ENCODE measurements at regions of chr6 and their contacts with region 1.

Region 1: GRCh38 chr6:35452186-35453090 is at the start of gene FANCE:
- DNase-seq: peak; percentile 98
- H3K4me3 ChIP-seq: peak within 1 kb of the TSS; percentile 47 to 69 (median 65)
- H3K27ac ChIP-seq: peak within 1 kb of the TSS; percentile 69 to 88 (median 84)
- H3K4me1 ChIP-seq: peaks cover 9 to 21% (median 16%) of the 10 kb centered on the region in 4 donors
- H3K27me3 ChIP-seq: no peaks in the 10 kb centered on the region
- CTCF ChIP-seq: no peak
- EP300 ChIP-seq: no peak
- POLR2A ChIP-seq: peak; percentile 29
- total RNA-seq, gene FANCE: 0.75 to 30.8 (median 3.8) TPM

Region 2: GRCh38 chr6:34425498-34426410 is 1026.7 kb before region 1 on chr6 and contains the start of gene RPS10:
- in situ Hi-C with region 1: no loop called
- intact Hi-C with region 1: loop called (anchors 10 kb)
- DNase-seq: peak; percentile 94
- H3K4me3 ChIP-seq: peak within 1 kb of the TSS; percentile 48 to 76 (median 60)
- H3K27ac ChIP-seq: peak within 1 kb of the TSS; percentile 82 to 88 (median 86)
- H3K4me1 ChIP-seq: peaks cover 3 to 20% (median 11%) of the 10 kb centered on the region in 4 donors
- H3K27me3 ChIP-seq: no peaks in the 10 kb centered on the region
- CTCF ChIP-seq: no peak
- EP300 ChIP-seq: no peak
- POLR2A ChIP-seq: peak; percentile 85
- total RNA-seq, gene RPS10: 892 to 1,969 (median 1,491) TPM

Region 3: DNA sequence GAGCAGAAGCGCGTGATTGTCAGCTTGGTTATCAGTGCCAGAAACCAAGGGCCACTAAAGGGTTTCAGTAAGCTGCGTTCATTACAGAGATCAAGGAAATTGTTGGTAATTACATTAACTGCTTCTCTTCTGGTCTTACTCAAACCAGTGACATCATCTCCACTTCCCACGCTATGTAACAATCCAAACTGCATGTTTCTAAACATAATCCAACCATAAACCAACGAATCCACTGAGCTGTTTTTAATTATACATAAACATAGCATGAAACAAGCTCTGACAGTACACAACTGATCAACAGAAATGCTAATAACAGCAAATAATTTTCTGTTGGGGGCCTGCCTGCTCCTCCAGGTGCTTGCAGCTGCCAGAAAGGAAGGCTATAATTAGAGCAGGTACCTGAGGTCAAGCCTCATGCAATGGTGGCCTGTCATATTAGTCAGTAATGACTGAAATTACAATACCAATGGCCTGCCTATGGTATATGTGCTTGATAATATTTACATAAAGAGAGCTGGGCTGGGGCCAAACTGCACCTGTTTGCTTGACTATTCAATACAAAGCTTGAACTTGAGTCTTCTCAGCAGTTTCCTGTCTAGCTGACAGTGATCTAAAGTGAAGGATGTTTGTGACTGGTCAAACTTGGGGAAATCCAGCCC is 795.9 kb before region 1 on chr6:
- in situ Hi-C with region 1: no loop called
- intact Hi-C with region 1: no loop called
- DNase-seq: peak; percentile 69
- H3K4me3 ChIP-seq: peak overlapping the region in 2 of 4 donors; percentile 26 to 43
- H3K27ac ChIP-seq: peak overlapping the region; percentile 81 to 95 (median 90)
- H3K4me1 ChIP-seq: peaks cover 24 to 40% (median 30%) of the 10 kb centered on the region in 4 donors
- H3K27me3 ChIP-seq: no peaks in the 10 kb centered on the region
- CTCF ChIP-seq: no peak
- EP300 ChIP-seq: no peak
- POLR2A ChIP-seq: no peak

Region 4: DNA sequence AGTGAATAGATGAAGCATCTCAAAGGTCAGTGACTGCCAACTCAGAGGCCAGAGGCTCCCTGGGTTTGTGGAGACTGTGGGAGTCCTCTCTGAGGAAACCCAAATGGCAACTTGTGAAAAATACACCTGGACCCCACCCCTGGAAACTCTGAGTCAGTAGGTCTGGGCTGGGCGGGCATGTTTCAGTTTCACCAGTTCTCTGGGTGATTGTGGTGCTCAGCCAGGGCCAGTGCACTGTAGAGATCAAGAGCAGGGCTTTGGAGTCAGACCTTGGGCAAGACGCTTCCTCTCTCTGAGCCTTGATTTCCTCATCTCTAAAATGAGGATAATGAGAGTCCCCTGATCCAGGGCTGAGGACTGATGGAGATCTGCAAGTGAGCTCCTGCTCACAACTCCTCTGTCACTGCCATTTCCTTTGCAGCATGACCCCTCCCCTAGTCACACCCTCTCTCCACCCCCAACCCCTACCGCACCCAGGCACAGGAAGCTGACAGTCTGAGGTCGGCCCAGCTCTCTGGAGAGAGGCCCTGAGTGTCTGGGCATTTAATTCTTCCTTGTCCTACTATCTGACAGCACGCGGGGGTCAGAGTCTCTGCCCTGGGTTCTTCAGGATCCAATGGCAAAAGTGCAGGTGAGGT is 149.7 kb before region 1 on chr6:
- in situ Hi-C with region 1: loop called in 1 of 4 experiments (anchors 25 kb)
- intact Hi-C with region 1: no loop called
- DNase-seq: peak; percentile 82
- H3K4me3 ChIP-seq: peak overlapping the region in 1 of 4 donors; percentile 28
- H3K27ac ChIP-seq: peak overlapping the region; percentile 58 to 76 (median 68)
- H3K4me1 ChIP-seq: peaks cover 7 to 32% (median 11%) of the 10 kb centered on the region in 4 donors
- H3K27me3 ChIP-seq: no peaks in the 10 kb centered on the region
- CTCF ChIP-seq: no peak
- EP300 ChIP-seq: no peak
- POLR2A ChIP-seq: peak; percentile 65

Region 5: GRCh38 chr6:35342258-35343091 is 110.0 kb before region 1 on chr6 and contains the start of gene PPARD:
- in situ Hi-C with region 1: loop called in 3 of 4 experiments (anchors 5 to 10 kb)
- intact Hi-C with region 1: loop called (anchors 5 kb)
- DNase-seq: peak; percentile 99
- H3K4me3 ChIP-seq: peak within 1 kb of the TSS; percentile 80 to 99 (median 94)
- H3K27ac ChIP-seq: peak within 1 kb of the TSS; percentile 88 to 96 (median 90)
- H3K4me1 ChIP-seq: peaks cover 4 to 30% (median 13%) of the 10 kb centered on the region in 4 donors
- H3K27me3 ChIP-seq: peaks cover 2% of the 10 kb centered on the region
- CTCF ChIP-seq: peak; percentile 95 to 99 (median 97)
- EP300 ChIP-seq: no peak
- POLR2A ChIP-seq: peak; percentile 81
- total RNA-seq, gene PPARD: 19.8 to 110 (median 29.3) TPM

Region 6: DNA sequence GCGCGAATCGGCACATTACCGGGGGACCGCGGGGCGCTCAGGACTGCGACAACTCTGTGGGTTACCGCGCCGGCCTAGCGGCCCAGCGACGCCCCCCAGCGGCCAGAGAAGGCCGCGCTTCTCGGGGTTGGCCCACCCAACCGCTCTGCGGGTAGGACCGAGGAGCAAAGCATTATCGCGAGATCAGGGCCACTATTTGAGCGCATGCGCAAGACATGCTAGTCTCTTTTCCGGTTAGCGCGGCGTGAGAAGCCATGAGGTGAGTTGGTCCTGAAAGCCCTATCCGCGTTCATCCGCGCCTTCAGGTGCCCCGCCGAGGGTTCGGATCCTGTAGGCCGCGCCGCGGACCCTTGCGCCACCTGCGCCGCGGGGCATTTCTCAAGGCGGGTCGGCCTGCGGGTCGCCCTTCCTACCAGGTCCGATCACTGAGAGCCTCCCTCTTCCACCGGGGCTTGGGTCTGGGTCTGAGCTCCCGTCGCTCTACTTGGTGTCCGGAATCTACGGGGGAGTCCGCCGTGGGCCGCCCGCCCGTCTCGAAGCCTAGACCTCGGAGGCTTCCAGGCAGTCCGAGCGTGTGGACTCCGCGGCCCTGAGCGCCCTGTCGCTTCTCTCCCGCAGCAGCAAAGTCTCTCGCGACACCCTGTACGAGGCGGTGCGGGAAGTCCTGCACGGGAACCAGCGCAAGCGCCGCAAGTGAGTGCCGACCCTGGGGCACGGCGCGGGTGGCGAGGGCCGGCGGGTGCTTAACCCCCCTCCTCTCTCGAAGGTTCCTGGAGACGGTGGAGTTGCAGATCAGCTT is 15.9 kb after region 1 on chr6 and contains the start of gene RPL10A:
- in situ Hi-C with region 1: no loop called
- intact Hi-C with region 1: loop called (anchors 1 kb)
- DNase-seq: peak; percentile 97
- H3K4me3 ChIP-seq: peak within 1 kb of the TSS; percentile 68 to 83 (median 76)
- H3K27ac ChIP-seq: peak within 1 kb of the TSS; percentile 88 to 95 (median 92)
- H3K4me1 ChIP-seq: peaks cover 11 to 39% (median 25%) of the 10 kb centered on the region in 4 donors
- H3K27me3 ChIP-seq: no peaks in the 10 kb centered on the region
- CTCF ChIP-seq: peak; percentile 92 to 98 (median 97)
- EP300 ChIP-seq: no peak
- POLR2A ChIP-seq: peak; percentile 91
- total RNA-seq, gene RPL10A: 323 to 991 (median 649) TPM

Measured in transverse colon (tissue), 4 donors.